ENCODE measurements at regions of chr14 and their contacts with region 1.

Region 1: DNA sequence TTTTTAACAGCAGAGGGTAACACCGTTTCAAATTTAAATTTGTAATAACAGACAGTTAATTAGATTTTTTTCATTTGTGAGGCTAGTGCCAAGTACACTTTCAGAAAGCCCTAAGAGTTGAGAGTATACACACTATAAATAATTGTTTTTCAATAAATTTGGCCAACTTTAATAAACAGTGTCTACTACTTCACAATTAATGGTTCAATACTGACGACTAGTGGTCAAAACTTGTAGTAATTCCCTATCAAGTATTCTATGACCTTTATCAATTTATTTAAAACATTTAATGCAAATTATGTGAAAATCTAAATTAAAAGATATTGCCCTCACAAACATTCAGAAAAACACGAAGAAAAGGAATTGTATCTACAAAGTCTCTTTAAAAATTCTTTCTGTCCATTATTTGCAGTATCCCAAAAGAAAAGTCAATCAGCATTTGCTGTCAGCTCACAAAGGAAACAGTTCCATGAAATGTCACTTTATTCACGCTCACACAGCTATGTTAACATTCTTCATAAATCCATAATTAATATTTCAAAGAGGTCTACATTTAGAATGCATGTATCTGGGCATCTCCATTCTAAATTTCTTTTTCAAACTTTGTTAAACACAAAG is 91.2 kb downstream of the CEP128 start:
- DNase-seq: no peak
- H3K4me3 Mint-ChIP-seq: no peak overlapping the region
- H3K27ac Mint-ChIP-seq: no peak overlapping the region
- H3K4me1 Mint-ChIP-seq: no peaks in the 10 kb centered on the region
- H3K27me3 Mint-ChIP-seq: no peaks in the 10 kb centered on the region

Region 2: GRCh38 chr14:80213599-80213998 is 636.7 kb before region 1 on chr14:
- intact Hi-C with region 1: loop called (anchors 5 kb)
- DNase-seq: no peak
- H3K4me3 Mint-ChIP-seq: no peak overlapping the region
- H3K27ac Mint-ChIP-seq: no peak overlapping the region
- H3K4me1 Mint-ChIP-seq: no peaks in the 10 kb centered on the region
- H3K27me3 Mint-ChIP-seq: no peaks in the 10 kb centered on the region

Region 3: DNA sequence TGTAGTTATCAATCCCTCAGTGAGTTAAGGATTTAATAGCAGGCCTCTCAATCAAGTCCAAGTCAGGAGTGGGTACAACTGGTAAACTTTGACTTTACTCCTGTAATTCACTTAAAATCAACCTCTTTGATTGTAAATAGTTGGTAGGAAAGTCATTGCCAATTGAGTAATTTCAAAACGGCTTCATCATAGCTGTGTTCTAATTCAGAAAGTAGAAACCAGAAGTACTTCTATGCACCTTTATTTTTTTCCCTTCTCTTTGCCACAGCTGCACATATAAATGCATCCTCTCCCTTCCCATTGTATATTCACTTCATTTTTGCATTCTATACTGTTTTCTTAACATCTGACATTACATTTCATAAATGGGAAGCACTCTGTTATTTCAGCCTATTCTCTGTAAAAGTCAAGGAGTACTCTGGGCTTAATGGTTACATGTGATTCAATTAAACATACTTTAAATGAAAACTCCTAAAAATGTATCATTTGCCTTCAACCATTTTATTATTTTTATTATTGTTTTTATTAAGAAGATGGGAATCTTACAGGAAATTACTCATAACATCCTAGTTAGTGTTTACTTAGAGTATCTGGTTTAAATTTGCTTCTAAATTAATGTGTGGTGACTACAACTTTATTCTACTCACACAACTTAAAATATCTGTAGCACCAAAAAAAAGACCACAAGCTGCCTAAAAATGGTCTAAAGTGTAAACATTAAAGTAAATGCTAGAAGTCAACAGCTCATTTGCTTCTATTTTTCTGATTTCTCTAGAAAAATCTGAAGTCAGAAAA is 80.0 kb before region 1 on chr14:
- intact Hi-C with region 1: no loop called
- DNase-seq: no peak
- H3K4me3 Mint-ChIP-seq: no peak overlapping the region
- H3K27ac Mint-ChIP-seq: no peak overlapping the region
- H3K4me1 Mint-ChIP-seq: peaks cover 1% of the 10 kb centered on the region
- H3K27me3 Mint-ChIP-seq: no peaks in the 10 kb centered on the region

Region 4: DNA sequence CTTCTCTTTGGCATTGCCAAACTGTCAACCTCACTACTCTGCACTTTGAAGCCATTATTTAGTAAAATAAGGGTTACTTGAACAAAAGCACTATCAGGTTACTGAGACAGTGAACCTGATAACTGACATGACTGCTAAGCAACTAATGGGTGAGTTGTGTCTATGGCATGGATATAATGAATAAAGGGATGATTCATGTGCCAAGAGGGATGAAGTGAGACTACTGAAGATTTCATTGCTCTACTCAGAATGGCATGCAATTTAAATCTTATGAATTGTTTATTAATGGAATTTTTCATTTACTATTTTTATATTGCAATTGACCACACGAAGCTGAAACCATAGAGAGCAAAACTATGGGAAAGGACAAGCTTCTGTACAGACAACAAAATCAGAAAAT is 16.8 kb after region 1 on chr14:
- intact Hi-C with region 1: no loop called
- DNase-seq: no peak
- H3K4me3 Mint-ChIP-seq: no peak overlapping the region
- H3K27ac Mint-ChIP-seq: no peak overlapping the region
- H3K4me1 Mint-ChIP-seq: no peaks in the 10 kb centered on the region
- H3K27me3 Mint-ChIP-seq: no peaks in the 10 kb centered on the region

Measured in activated T-helper 2 cell treated with anti-CD3 and anti-CD28 coated beads, Interferon-gamma antibody, Interleukin-2, Interleukin-4, amounts not matched to agents 10 μg/mL and 5 μg/mL and 100 μg/mL, durations not matched to agents 14 hours and 24 hours and 36 hours (primary cell).